Activated CD4-positive, alpha-beta T cell treated with anti-CD3 and anti-CD28 coated beads for 36 hours (primary cell): ENCODE measurements at regions of chr5 and their contacts with region 1.

Region 1: GRCh38 chr5:168313596-168314204 is 22.3 kb downstream of the WWC1 start:
- DNase-seq: no peak
- ATAC-seq: no peak
- H3K4me3 Mint-ChIP-seq: no peak overlapping the region
- H3K27ac Mint-ChIP-seq: no peak overlapping the region
- H3K4me1 Mint-ChIP-seq: no peaks in the 10 kb centered on the region
- H3K27me3 Mint-ChIP-seq: peaks cover 5% of the 10 kb centered on the region

Region 2: DNA sequence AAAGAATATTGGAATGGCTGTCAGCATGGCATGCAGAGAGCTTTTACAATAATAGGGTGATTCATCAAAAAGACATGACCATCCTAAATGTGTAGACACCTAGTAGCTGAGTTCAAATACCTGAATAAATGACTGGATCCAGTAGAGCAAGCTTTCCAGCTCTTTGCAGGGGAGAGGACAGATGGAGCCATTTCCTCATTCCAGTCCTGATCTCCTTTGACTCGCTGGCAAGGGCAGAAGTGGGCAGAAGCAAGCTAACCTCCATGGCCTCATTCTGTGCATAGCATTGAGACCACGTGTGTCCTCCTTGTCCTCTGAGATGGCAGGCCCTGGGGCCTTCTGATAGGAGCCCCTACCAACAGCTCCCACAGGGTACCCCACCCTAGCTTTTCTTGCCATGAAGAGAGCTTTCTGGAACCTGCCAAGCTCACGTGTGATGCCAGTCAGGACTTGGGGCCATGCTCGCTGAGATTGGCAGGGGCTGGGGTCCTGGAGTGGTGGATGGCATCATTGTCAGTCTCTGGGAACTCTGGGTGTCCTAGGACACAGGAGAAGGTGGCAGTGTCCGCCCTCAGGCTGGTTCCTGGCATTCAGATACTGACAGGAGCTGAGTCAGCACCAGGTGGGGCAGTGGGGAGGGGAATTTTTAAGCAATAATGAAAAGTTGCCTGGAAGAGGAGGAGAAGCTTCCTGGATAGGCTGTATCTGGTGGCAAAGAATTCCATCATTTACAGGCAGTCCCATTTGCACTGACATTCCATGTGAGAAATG is 11.3 kb after region 1 on chr5:
- CTCF ChIA-PET with region 1: interaction called, 3 read pairs
- POLR2A ChIA-PET with region 1: interaction called, 10 read pairs
- intact Hi-C with region 1: no loop called
- DNase-seq: no peak
- ATAC-seq: no peak
- H3K4me3 Mint-ChIP-seq: no peak overlapping the region
- H3K27ac Mint-ChIP-seq: no peak overlapping the region
- H3K4me1 Mint-ChIP-seq: peaks cover 4% of the 10 kb centered on the region
- H3K27me3 Mint-ChIP-seq: peaks cover 20% of the 10 kb centered on the region